ENCODE measurements at regions of chr6 and their contacts with region 1.

Region 1: GRCh38 chr6:149028767-149029405 is 282.1 kb downstream of the UST start:
- DNase-seq: peak; percentile 88
- ATAC-seq: no peak
- H3K4me3 ChIP-seq: no peak overlapping the region
- H3K27ac ChIP-seq: no peak overlapping the region
- H3K4me1 ChIP-seq: peaks cover 38% of the 10 kb centered on the region
- H3K27me3 ChIP-seq: no peaks in the 10 kb centered on the region
- CTCF ChIP-seq: peak; percentile 67

Region 2: GRCh38 chr6:148700741-148701311 is 328.1 kb before region 1 on chr6:
- CTCF ChIA-PET with region 1: no interaction called
- POLR2A ChIA-PET with region 1: no interaction called
- intact Hi-C with region 1: no loop called
- DNase-seq: peak; percentile 39
- ATAC-seq: peak; percentile 62
- H3K4me3 ChIP-seq: peak overlapping the region; percentile 81
- H3K27ac ChIP-seq: no peak overlapping the region
- H3K4me1 ChIP-seq: peaks cover 15% of the 10 kb centered on the region
- H3K27me3 ChIP-seq: no peaks in the 10 kb centered on the region
- CTCF ChIP-seq: no peak

Region 3: GRCh38 chr6:148746363-148747144 is 282.3 kb before region 1 on chr6 and contains the start of gene UST:
- CTCF ChIA-PET with region 1: no interaction called
- POLR2A ChIA-PET with region 1: no interaction called
- intact Hi-C with region 1: loop called (anchors 1 kb)
- DNase-seq: peak; percentile 74
- ATAC-seq: peak; percentile 71
- H3K4me3 ChIP-seq: peak within 1 kb of the TSS; percentile 88
- H3K27ac ChIP-seq: 0 out of 2 replicates have a peak within 1 kb of the TSS, but pooled peaks have one; percentile 5
- H3K4me1 ChIP-seq: peaks cover 7% of the 10 kb centered on the region; the same call in 1 of the 2 replicates
- H3K27me3 ChIP-seq: no peaks in the 10 kb centered on the region
- CTCF ChIP-seq: peak; percentile 51; the same call in 1 of the 2 replicates
- total RNA-seq, gene UST: 3.9 and 7.9 TPM in 2 replicates

Region 4: GRCh38 chr6:148854096-148854495 is 174.8 kb before region 1 on chr6:
- CTCF ChIA-PET with region 1: no interaction called
- POLR2A ChIA-PET with region 1: no interaction called
- intact Hi-C with region 1: no loop called
- DNase-seq: no peak
- ATAC-seq: no peak
- H3K4me3 ChIP-seq: no peak overlapping the region
- H3K27ac ChIP-seq: no peak overlapping the region
- H3K4me1 ChIP-seq: peaks cover 25% of the 10 kb centered on the region
- H3K27me3 ChIP-seq: no peaks in the 10 kb centered on the region
- CTCF ChIP-seq: no peak

Region 5: GRCh38 chr6:148972481-148972880 is 56.4 kb before region 1 on chr6:
- CTCF ChIA-PET with region 1: no interaction called
- POLR2A ChIA-PET with region 1: no interaction called
- intact Hi-C with region 1: loop called (anchors 5 kb)
- DNase-seq: peak; percentile 70
- ATAC-seq: peak; percentile 80
- H3K4me3 ChIP-seq: no peak overlapping the region
- H3K27ac ChIP-seq: no peak overlapping the region
- H3K4me1 ChIP-seq: peaks cover 16% of the 10 kb centered on the region
- H3K27me3 ChIP-seq: no peaks in the 10 kb centered on the region
- CTCF ChIP-seq: no peak

Region 6: GRCh38 chr6:148983966-148984365 is 44.9 kb before region 1 on chr6:
- CTCF ChIA-PET with region 1: no interaction called
- POLR2A ChIA-PET with region 1: no interaction called
- intact Hi-C with region 1: no loop called
- DNase-seq: no peak
- ATAC-seq: no peak
- H3K4me3 ChIP-seq: no peak overlapping the region
- H3K27ac ChIP-seq: no peak overlapping the region
- H3K4me1 ChIP-seq: peaks cover 11% of the 10 kb centered on the region
- H3K27me3 ChIP-seq: no peaks in the 10 kb centered on the region
- CTCF ChIP-seq: no peak

Region 7: GRCh38 chr6:149075616-149076364 is 46.9 kb after region 1 on chr6:
- CTCF ChIA-PET with region 1: no interaction called
- POLR2A ChIA-PET with region 1: no interaction called
- intact Hi-C with region 1: loop called (anchors 1 kb)
- DNase-seq: peak; percentile 77
- ATAC-seq: peak; percentile 91
- H3K4me3 ChIP-seq: no peak overlapping the region
- H3K27ac ChIP-seq: peak overlapping the region; percentile 61
- H3K4me1 ChIP-seq: peaks cover 49% of the 10 kb centered on the region
- H3K27me3 ChIP-seq: no peaks in the 10 kb centered on the region
- CTCF ChIP-seq: no peak

Region 8: GRCh38 chr6:149324428-149324827 is 295.5 kb after region 1 on chr6:
- CTCF ChIA-PET with region 1: no interaction called
- POLR2A ChIA-PET with region 1: no interaction called
- intact Hi-C with region 1: loop called (anchors 5 kb)
- DNase-seq: no peak
- ATAC-seq: no peak
- H3K4me3 ChIP-seq: no peak overlapping the region
- H3K27ac ChIP-seq: no peak overlapping the region
- H3K4me1 ChIP-seq: peaks cover 43% of the 10 kb centered on the region
- H3K27me3 ChIP-seq: no peaks in the 10 kb centered on the region
- CTCF ChIP-seq: no peak

Region 9: GRCh38 chr6:149499066-149499465 is 470.2 kb after region 1 on chr6:
- CTCF ChIA-PET with region 1: no interaction called
- POLR2A ChIA-PET with region 1: no interaction called
- intact Hi-C with region 1: loop called (anchors 1 kb)
- DNase-seq: peak; percentile 92
- ATAC-seq: peak; percentile 79
- H3K4me3 ChIP-seq: no peak overlapping the region
- H3K27ac ChIP-seq: peak overlapping the region; percentile 75
- H3K4me1 ChIP-seq: peaks cover 29% of the 10 kb centered on the region
- H3K27me3 ChIP-seq: no peaks in the 10 kb centered on the region
- CTCF ChIP-seq: no peak

Measured in PC-3 (cell line).